Aorta (tissue), 5 donors: ENCODE measurements at regions of chr3 and their contacts with region 1.

Region 1: GRCh38 chr3:189148081-189148507 is 23.7 kb upstream of the TPRG1 start:
- DNase-seq: peak; percentile 67 to 79
- ATAC-seq: peak; percentile 88
- H3K4me3 ChIP-seq: no peak overlapping the region
- H3K27ac ChIP-seq: no peak overlapping the region
- H3K4me1 ChIP-seq: no peaks in the 10 kb centered on the region
- H3K27me3 ChIP-seq: no peaks in the 10 kb centered on the region

Region 2: GRCh38 chr3:188830893-188831292 is 317.2 kb before region 1 on chr3:
- intact Hi-C with region 1: no loop called
- DNase-seq: no peak
- ATAC-seq: no peak
- H3K4me3 ChIP-seq: no peak overlapping the region
- H3K27ac ChIP-seq: no peak overlapping the region
- H3K4me1 ChIP-seq: peaks cover 2 to 9% of the 10 kb centered on the region in 2 donors
- H3K27me3 ChIP-seq: no peaks in the 10 kb centered on the region

Region 3: DNA sequence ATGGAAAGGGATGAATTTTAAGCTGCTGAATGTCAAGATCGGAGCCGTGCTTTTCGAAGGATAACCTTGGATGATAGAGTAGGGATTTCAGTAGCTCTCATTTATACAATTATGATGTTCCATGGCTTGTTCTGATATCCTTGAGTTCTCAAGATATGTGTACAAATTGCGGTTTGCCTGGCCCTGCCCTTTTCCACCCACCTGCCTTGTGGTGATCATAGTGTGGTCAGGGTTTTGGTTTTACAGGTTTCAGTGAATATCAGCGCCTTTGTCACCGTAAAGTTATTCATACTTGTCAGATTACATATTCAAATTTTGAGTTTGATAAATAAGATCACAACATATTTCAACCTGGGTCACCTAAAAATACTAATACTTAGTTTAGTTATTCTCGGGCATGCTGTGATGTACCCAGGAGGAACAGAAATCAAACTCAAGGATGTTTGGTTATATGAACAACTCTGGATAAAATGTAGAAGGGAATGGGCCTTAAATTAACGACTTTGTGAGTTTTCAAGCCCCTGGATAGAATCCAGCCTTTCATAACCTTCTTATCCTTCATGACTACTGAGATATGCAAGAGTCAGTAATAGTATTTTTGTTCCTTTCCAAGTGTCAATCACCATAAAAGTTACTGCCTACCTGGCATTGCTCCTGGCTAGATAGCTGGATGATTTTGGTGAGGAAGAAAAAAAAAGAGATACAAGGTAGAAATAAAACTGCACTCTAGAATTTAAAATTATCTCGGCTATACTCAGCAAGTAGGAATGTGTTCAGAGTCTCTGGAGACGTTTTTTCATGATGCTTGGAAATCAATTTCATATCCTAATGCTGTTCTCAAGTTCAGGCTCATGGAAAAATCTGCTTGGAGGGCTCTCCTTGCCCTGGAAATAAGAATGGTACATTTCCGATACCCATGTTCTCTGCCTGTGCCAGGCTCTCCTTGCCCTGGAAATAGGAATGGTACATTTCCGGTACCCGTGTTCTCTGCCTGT is 185.5 kb before region 1 on chr3:
- intact Hi-C with region 1: loop called (anchors 5 to 10 kb)
- DNase-seq: no peak
- ATAC-seq: peak; percentile 41
- H3K4me3 ChIP-seq: no peak overlapping the region
- H3K27ac ChIP-seq: no peak overlapping the region
- H3K4me1 ChIP-seq: no peaks in the 10 kb centered on the region
- H3K27me3 ChIP-seq: no peaks in the 10 kb centered on the region